ENCODE measurements at regions of chr18 and their contacts with region 1.

Region 1: DNA sequence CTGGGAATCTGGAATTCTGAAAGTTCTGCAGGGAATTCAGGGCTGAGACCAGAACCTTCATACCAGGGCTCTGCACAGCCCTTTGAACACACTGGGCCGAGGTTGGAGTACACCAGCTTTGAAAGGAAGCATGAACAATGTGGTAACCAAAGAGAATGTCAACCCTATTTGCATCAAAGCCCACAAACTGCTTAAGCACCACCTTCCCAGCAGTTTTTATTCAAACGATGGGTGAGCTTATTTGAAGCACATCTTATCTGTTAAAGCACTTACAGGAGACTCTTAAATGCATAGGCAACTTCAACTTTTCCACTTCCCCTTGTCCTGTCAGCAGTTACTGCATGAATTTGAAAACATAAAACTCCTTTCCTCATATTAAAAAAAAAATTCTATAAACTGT is 96.6 kb downstream of the TXNL1 start:
- DNase-seq: no peak
- H3K4me3 ChIP-seq: no peak overlapping the region
- H3K27ac ChIP-seq: no peak overlapping the region
- H3K4me1 ChIP-seq: no peaks in the 10 kb centered on the region
- H3K27me3 ChIP-seq: peaks cover 2% of the 10 kb centered on the region
- CTCF ChIP-seq: no peak

Region 2: GRCh38 chr18:56460581-56460980 is 81.2 kb before region 1 on chr18:
- CTCF ChIA-PET with region 1: no interaction called
- dilution Hi-C with region 1: loop called (anchors 5 kb)
- in situ Hi-C with region 1: no loop called
- intact Hi-C with region 1: no loop called
- DNase-seq: no peak
- H3K4me3 ChIP-seq: no peak overlapping the region
- H3K27ac ChIP-seq: no peak overlapping the region
- H3K4me1 ChIP-seq: no peaks in the 10 kb centered on the region
- H3K27me3 ChIP-seq: no peaks in the 10 kb centered on the region
- CTCF ChIP-seq: no peak